Activated CD4-positive, alpha-beta T cell treated with anti-CD3 and anti-CD28 coated beads, Interleukin-2, amount 10 ng/mL, durations not matched to agents 24 days and 14 days (primary cell): ENCODE measurements at regions of chr21 and their contacts with region 1.

Region 1: DNA sequence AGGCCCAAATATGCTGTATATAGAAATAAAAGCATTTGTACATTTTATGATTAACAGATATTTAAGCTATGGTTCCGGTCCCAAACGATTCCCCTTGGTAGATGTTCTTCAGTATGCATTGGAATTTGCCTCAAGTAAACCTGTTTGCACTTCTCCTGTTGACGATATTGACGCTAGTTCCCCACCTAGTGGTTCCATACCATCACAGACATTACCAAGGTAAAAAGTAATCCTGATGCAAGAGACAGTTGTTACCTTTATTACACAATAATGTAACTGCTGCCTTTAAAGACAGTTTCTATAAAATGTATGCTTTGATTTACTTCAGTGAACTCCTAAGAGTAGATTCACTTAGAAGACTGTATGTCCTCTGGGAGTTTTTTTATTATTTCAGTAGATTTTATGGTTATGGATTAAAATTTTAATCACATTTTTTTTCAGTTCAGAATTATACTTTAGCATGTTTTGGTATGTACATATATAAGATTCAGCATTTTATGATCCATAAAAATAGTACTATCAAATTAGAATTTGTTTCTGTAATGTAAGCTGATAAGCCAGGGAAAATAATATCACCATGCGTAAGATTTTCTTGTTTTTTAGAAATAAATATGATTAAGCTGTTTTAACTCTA is 96.5 kb downstream of the USP25 start:
- DNase-seq: peak; percentile 77
- H3K4me3 Mint-ChIP-seq: no peak overlapping the region
- H3K27ac Mint-ChIP-seq: no peak overlapping the region
- H3K4me1 Mint-ChIP-seq: peaks cover 14% of the 10 kb centered on the region
- H3K27me3 Mint-ChIP-seq: no peaks in the 10 kb centered on the region

Region 2: GRCh38 chr21:15549675-15550074 is 276.6 kb before region 1 on chr21:
- intact Hi-C with region 1: no loop called
- DNase-seq: peak; percentile 9
- H3K4me3 Mint-ChIP-seq: no peak overlapping the region
- H3K27ac Mint-ChIP-seq: no peak overlapping the region
- H3K4me1 Mint-ChIP-seq: no peaks in the 10 kb centered on the region
- H3K27me3 Mint-ChIP-seq: peaks cover 2% of the 10 kb centered on the region

Region 3: DNA sequence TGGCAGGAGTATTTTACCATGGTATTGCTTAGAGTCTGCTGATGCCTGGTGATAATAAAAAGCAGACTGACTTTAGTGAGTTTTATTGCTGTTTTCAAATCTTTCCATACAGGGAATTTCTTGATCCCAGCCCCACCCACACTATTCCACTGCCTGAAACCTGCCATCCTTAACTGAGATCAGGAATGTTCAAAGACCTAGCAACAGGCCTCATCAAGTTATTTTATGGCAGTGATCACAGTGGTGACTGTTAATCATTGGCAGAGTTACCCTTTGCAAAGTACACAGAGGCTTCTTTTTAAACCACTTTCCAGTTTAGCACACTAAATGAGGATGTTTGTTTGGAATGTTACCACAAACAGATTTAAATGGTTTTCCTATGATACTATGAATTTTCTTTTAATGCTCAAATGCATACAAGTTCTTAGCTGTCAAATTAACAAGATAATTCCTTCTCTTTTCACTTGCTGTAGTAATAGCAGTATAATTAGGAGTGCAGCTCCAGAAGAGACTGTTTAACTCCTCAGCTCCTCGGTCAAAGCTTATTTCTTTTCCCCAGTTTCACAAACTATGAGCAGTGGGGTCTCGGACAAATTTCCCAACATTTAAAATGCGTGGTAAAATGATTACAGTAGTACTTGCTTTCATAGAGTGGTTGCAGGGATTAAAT is 166.4 kb before region 1 on chr21:
- intact Hi-C with region 1: loop called (anchors 10 kb)
- DNase-seq: no peak
- H3K4me3 Mint-ChIP-seq: no peak overlapping the region
- H3K27ac Mint-ChIP-seq: no peak overlapping the region
- H3K4me1 Mint-ChIP-seq: no peaks in the 10 kb centered on the region
- H3K27me3 Mint-ChIP-seq: peaks cover 3% of the 10 kb centered on the region